HCT116 (cell line): ENCODE measurements at regions of chr11 and their contacts with region 1.

Region 1: GRCh38 chr11:95705485-95706124 is 84.0 kb downstream of the FAM76B start:
- DNase-seq: peak; percentile 82
- ATAC-seq: peak; percentile 98
- H3K4me3 ChIP-seq: no peak overlapping the region
- H3K27ac ChIP-seq: no peak overlapping the region
- H3K4me1 ChIP-seq: 0 out of 4 replicates have a peak, but pooled peaks cover 0 to 3% of the 10 kb centered on the region in 2 experiments
- H3K27me3 ChIP-seq: peaks cover 19% of the 10 kb centered on the region
- CTCF ChIP-seq: peak; percentile 92 to 97 (median 94)
- POLR2A ChIP-seq: no peak
- RAD21 ChIP-seq: peak; percentile 95

Region 2: GRCh38 chr11:95156916-95157541 is 548.6 kb before region 1 on chr11:
- CTCF ChIA-PET with region 1: interaction called, 127 read pairs
- POLR2A ChIA-PET with region 1: interaction called, 3 read pairs
- RAD21 ChIA-PET with region 1: interaction called, 12 to 15 read pairs
- intact Hi-C with region 1: loop called (anchors 1 kb)
- DNase-seq: no peak
- ATAC-seq: no peak
- H3K4me3 ChIP-seq: no peak overlapping the region
- H3K27ac ChIP-seq: no peak overlapping the region
- H3K4me1 ChIP-seq: peaks cover 0 to 1% of the 10 kb centered on the region in 2 experiments; a peak in 2 of 4 replicates
- H3K27me3 ChIP-seq: no peaks in the 10 kb centered on the region
- CTCF ChIP-seq: no peak
- POLR2A ChIP-seq: no peak
- RAD21 ChIP-seq: no peak

Region 3: DNA sequence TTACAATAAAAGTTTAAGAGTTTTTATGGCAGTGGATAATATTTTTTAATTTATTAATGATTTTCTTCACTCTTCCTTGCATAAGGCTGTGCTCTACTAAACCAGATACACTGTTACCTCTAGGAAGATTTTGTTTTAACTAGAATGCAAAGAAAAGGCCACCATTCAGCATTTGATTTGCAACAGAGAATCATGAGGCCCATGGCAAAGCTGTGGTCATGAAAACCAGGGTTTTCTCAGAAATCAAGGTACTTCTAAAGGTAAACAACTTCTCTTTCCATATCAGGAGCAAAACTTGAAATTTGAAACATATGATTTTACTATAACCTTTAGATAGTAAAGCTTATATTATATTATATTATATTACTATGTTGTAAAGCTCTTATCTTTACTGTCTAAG is 10.4 kb before region 1 on chr11:
- CTCF ChIA-PET with region 1: interaction called, 10 read pairs
- POLR2A ChIA-PET with region 1: interaction called, 3 read pairs
- RAD21 ChIA-PET with region 1: no interaction called
- intact Hi-C with region 1: no loop called
- DNase-seq: no peak
- ATAC-seq: no peak
- H3K4me3 ChIP-seq: no peak overlapping the region
- H3K27ac ChIP-seq: no peak overlapping the region
- H3K4me1 ChIP-seq: no peaks in the 10 kb centered on the region
- H3K27me3 ChIP-seq: peaks cover 23% of the 10 kb centered on the region
- CTCF ChIP-seq: no peak
- POLR2A ChIP-seq: no peak
- RAD21 ChIP-seq: no peak

Region 4: DNA sequence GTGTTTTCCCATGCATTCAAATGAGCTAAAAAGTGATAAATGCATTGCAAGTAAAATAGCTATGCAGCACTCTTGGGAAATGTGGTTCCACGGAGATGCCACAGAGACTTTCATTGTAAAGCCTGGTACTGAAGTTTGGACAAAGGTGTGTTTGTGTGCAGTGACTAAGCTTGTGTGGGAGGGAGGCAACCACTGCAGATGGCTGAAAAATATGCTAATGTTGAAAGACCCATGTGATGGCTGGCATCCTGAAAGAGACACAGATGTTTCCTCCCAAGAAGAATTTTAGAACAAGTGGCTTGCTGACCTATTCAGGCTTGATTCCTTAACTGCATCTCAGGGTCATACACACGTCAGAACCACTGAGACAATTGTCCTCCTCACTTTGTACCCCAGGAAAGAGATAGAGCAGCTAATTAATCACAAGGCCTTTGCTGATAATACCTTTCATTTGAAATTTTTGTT is 10.2 kb after region 1 on chr11:
- CTCF ChIA-PET with region 1: interaction called, 16 read pairs
- POLR2A ChIA-PET with region 1: interaction called, 4 read pairs
- RAD21 ChIA-PET with region 1: no interaction called
- intact Hi-C with region 1: no loop called
- DNase-seq: no peak
- ATAC-seq: peak; percentile 36; the same call in 1 of the 2 replicates
- H3K4me3 ChIP-seq: no peak overlapping the region
- H3K27ac ChIP-seq: no peak overlapping the region
- H3K4me1 ChIP-seq: no peaks in the 10 kb centered on the region
- H3K27me3 ChIP-seq: peaks cover 32% of the 10 kb centered on the region
- CTCF ChIP-seq: no peak
- POLR2A ChIP-seq: no peak
- RAD21 ChIP-seq: no peak

Region 5: GRCh38 chr11:95739108-95739938 is 33.7 kb after region 1 on chr11:
- CTCF ChIA-PET with region 1: interaction called, 10 read pairs
- POLR2A ChIA-PET with region 1: no interaction called
- RAD21 ChIA-PET with region 1: no interaction called
- intact Hi-C with region 1: no loop called
- DNase-seq: no peak
- ATAC-seq: peak; percentile 66
- H3K4me3 ChIP-seq: no peak overlapping the region
- H3K27ac ChIP-seq: no peak overlapping the region
- H3K4me1 ChIP-seq: no peaks in the 10 kb centered on the region
- H3K27me3 ChIP-seq: 0 out of 2 replicates have a peak, but pooled peaks cover 5% of the 10 kb centered on the region
- CTCF ChIP-seq: peak in 2 of 3 experiments; percentile 38 to 45; a peak in 3 of 6 replicates
- POLR2A ChIP-seq: no peak
- RAD21 ChIP-seq: no peak